HCT116 (cell line): ENCODE measurements at regions of chr10 and their contacts with region 1.

Region 1: DNA sequence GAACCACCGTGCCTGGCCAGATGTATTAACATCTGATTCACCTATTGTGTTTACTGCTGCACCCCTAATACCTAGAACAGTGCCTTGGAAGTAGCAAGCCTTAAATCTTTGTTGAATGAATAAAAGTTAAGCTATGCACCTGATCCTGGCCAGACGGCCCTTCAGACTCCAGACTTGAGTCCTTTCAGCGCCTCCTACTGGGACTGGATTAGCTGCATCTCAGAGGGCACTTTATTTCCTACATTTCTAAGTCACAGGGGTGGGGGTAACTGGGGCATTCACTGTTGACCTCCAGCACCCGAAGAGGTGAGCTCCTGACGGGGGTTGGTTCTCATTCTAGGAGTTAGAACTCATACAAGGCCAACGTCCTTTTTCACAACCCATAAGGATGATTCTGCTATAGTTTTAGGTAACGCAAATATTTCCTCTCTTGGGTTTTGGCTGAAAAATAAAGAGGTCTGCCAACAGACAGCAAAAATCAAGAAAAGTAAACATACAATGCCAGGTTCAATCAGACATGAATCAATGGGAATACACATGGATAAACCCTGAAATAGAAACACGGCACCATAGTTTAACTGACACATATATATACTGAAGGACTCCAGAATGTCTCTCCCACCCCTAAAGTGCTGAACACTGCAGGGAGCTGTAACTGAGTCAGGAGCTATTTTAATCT is 48.0 kb upstream of the DLG5 start:
- DNase-seq: peak; percentile 57
- ATAC-seq: peak; percentile 79
- H3K4me3 ChIP-seq: no peak overlapping the region
- H3K27ac ChIP-seq: no peak overlapping the region
- H3K4me1 ChIP-seq: peaks cover 16 to 24% of the 10 kb centered on the region in 2 experiments
- H3K27me3 ChIP-seq: no peaks in the 10 kb centered on the region
- CTCF ChIP-seq: peak; percentile 68 to 72 (median 71); a peak in 5 of 6 replicates
- POLR2A ChIP-seq: no peak
- RAD21 ChIP-seq: peak; percentile 85

Region 2: DNA sequence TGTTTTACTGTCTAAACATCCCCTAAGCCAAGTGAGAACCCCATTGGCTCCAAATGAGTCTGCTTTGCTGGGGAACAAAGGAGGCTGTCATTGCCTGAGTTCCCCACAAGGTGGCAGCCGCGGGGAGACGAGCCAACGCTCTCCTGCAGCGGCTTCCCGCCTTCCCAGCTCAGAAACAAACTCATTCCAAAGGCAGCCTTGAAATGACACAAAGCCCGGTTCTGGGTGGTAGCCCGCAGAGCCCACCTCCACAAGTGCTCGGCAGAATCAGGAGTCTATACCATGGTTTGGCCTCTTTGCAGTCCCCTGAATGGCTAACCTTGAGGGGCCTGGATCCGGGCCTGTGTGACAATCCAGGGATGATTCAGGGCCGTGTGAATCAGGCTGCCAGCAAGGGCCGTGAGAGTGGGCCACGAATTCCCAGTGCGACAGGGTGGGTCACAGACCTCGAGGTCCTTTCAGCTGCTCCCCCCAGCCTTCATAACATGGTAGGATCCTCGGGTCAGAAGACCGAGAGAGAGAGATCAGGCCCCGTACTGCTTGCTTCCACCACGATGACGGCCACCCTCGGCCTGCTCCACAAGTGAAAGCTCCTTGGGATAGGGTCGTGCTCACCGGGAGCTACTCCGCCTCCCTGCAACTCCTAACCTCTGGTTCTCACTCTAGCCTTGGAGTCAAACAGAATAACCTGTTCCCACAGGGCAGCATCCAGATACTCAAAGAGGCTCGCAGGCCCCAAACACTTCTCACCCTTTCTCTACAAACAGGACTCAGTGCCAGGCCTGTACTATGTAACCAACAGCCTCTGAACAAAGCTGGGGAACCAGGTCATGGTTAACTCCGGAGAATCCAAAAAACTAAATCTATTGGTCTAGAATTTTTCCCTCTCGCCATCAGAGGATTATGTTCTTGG is 127.6 kb before region 1 on chr10:
- CTCF ChIA-PET with region 1: interaction called, 5 read pairs
- POLR2A ChIA-PET with region 1: no interaction called
- RAD21 ChIA-PET with region 1: interaction called, 4 to 5 read pairs
- intact Hi-C with region 1: loop called (anchors 1 kb)
- DNase-seq: peak; percentile 16
- ATAC-seq: peak; percentile 77
- H3K4me3 ChIP-seq: no peak overlapping the region
- H3K27ac ChIP-seq: peak overlapping the region; percentile 23
- H3K4me1 ChIP-seq: peaks cover 27 to 38% of the 10 kb centered on the region in 2 experiments
- H3K27me3 ChIP-seq: no peaks in the 10 kb centered on the region
- CTCF ChIP-seq: peak; percentile 80 to 91 (median 89)
- POLR2A ChIP-seq: no peak
- RAD21 ChIP-seq: peak; percentile 88

Region 3: GRCh38 chr10:77889277-77889903 is 85.1 kb before region 1 on chr10:
- CTCF ChIA-PET with region 1: interaction called, 20 read pairs
- POLR2A ChIA-PET with region 1: no interaction called
- RAD21 ChIA-PET with region 1: interaction called in 1 of 2 experiments, 7 read pairs
- intact Hi-C with region 1: no loop called
- DNase-seq: peak; percentile 80
- ATAC-seq: peak; percentile 90
- H3K4me3 ChIP-seq: peak overlapping the region in 1 of 2 experiments; percentile 24; a peak in 2 of 4 replicates
- H3K27ac ChIP-seq: peak overlapping the region; percentile 59
- H3K4me1 ChIP-seq: peaks cover 24 to 37% of the 10 kb centered on the region in 2 experiments
- H3K27me3 ChIP-seq: no peaks in the 10 kb centered on the region
- CTCF ChIP-seq: no peak
- POLR2A ChIP-seq: no peak
- RAD21 ChIP-seq: peak; percentile 26; the same call in 1 of the 2 replicates

Region 4: DNA sequence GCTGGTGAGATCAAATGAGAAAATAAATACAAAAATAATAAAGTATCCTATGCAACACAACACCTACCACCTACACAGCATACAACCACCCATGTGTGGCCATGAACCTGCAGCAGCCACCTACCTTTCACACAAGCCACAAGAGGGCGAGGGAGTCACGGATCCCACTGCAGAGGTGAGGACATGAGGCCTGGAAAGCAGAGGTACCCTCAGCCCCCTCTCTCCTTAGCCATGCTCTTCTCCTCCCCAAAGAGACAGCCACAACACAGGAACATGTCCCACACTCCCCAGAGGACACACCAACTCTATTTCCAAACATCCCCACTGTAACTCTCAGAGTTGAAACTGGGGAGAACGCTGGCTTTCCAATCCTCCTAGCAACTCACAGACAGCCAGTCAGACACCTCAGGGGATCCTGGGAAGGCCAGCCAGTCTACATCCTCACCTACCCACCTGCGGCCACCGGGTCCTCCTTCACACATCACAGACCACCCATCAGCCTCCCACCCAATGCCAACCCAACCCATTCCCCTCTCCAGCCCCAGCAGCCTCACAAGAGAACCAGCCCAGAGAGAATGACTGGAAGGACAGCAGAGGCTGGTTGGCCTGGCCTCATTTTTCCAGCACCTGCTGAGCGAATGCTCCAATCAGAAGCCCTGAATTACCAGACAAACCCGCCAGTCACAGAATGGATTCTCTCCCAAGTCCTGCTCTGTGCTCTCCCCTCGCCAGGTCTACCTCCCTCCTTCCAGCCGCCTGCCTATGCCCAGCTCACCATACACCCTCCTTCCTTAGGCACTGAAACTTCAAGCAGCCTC is 66.4 kb before region 1 on chr10:
- CTCF ChIA-PET with region 1: interaction called, 4 read pairs
- POLR2A ChIA-PET with region 1: no interaction called
- RAD21 ChIA-PET with region 1: no interaction called
- intact Hi-C with region 1: loop called (anchors 2 kb)
- DNase-seq: no peak
- ATAC-seq: peak; percentile 89
- H3K4me3 ChIP-seq: no peak overlapping the region
- H3K27ac ChIP-seq: no peak overlapping the region
- H3K4me1 ChIP-seq: peaks cover 21 to 58% of the 10 kb centered on the region in 2 experiments
- H3K27me3 ChIP-seq: no peaks in the 10 kb centered on the region
- CTCF ChIP-seq: peak; percentile 60 to 61 (median 61)
- POLR2A ChIP-seq: no peak
- RAD21 ChIP-seq: peak; percentile 77